Heart right ventricle (tissue), 16 donors: ENCODE measurements at regions of chr6 and their contacts with region 1.

Region 1: DNA sequence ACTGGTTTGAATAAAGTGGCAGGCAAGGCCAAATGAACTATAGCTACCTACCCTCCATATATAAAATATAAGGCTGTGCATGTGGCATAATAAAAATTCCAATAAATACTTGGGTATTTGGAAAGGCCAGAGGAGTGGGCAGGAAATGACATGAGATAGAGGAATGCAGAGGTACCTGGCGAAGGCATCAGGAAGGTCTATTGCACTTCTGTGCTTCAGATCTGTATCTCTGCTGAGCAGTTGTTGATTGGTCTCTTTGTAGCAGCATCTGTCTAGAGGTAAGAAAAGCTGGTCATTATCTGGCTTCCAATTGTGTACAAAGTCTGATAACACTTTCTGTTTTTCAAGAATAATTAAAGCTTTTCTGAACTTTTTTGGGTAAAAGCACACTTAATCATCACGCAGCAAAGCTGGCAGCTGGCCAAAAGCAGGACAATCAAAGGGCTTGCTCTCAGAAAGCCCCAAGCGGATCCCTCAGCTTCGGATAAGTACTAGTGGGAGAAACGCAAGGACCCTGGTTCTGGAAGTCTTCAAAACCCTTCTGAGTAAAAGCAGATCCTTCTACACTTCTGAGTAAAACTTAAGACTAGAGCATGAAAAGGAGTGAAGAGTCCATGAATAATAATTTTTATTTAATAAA is 120.1 kb upstream of the TCF21 start:
- DNase-seq: peak; percentile 14 to 25
- ATAC-seq: no peak
- H3K4me3 ChIP-seq: no peak overlapping the region
- H3K27ac ChIP-seq: peak overlapping the region in 1 of 10 donors; percentile 9
- H3K4me1 ChIP-seq: peaks cover 0 to 17% (median 0%) of the 10 kb centered on the region in 9 donors
- H3K27me3 ChIP-seq: peaks cover 0 to 4% (median 0%) of the 10 kb centered on the region in 7 donors
- CTCF ChIP-seq: no peak

Region 2: GRCh38 chr6:133730881-133731280 is 37.9 kb before region 1 on chr6:
- intact Hi-C with region 1: no loop called
- DNase-seq: no peak
- ATAC-seq: no peak
- H3K4me3 ChIP-seq: no peak overlapping the region
- H3K27ac ChIP-seq: peak overlapping the region in 1 of 10 donors; percentile 35
- H3K4me1 ChIP-seq: no peaks in the 10 kb centered on the region
- H3K27me3 ChIP-seq: no peaks in the 10 kb centered on the region
- CTCF ChIP-seq: no peak

Region 3: DNA sequence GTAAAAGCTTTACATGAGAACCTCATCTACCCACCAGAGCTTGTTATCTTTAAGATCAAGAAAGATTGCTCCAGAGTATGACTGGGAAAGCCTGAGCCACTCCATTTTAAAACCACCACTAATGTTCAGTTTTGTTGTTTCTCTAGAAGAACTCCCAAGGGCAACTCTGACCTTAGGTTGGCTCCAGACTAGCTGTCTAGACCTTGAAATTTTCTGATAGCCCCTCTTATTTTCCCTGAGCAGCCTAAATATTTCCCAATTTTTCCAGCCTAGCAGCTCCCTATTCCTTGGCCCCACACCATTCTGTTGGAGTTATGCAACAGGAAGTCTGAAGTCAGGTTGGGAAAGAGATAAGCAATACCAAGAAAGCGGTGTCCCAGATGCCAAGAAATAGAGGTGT is 35.5 kb after region 1 on chr6:
- intact Hi-C with region 1: no loop called
- DNase-seq: peak in 1 of 2 donors; percentile 12
- ATAC-seq: peak; percentile 53 to 87 (median 70)
- H3K4me3 ChIP-seq: no peak overlapping the region
- H3K27ac ChIP-seq: peak overlapping the region in 1 of 10 donors; percentile 24
- H3K4me1 ChIP-seq: peaks cover 0 to 5% (median 0%) of the 10 kb centered on the region in 9 donors
- H3K27me3 ChIP-seq: no peaks in the 10 kb centered on the region
- CTCF ChIP-seq: no peak

Region 4: DNA sequence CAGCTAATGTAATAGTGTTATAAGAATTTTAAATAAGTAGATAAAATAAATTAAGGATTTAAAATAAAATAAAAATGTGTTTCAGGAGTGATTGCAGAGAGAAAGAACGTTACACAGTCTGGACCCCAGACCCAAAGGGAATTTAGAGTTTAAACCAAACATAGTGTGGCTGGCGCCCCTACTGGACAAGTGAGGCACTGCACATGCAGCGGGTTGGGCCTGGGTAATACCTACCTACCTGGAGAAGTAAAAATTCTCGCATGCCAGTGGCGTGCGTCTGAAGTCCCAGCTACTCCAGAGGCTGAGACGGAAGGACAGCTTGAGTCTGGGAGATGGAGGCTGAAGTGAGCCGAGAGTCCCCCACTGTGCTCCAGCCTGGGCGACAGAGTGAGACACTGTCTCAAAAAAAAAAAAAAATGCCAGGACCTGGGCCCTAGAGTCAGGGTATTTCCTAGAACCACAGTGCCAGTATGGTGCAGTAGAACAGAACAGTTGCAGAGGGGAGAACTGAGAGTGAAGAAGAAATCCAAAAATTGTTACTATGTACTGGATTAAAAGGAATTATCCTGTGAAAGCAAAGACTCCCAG is 48.8 kb after region 1 on chr6:
- intact Hi-C with region 1: loop called in 1 of 10 experiments (anchors 10 kb)
- DNase-seq: no peak
- ATAC-seq: no peak
- H3K4me3 ChIP-seq: no peak overlapping the region
- H3K27ac ChIP-seq: peak overlapping the region in 1 of 10 donors; percentile 18
- H3K4me1 ChIP-seq: peaks cover 0 to 5% (median 0%) of the 10 kb centered on the region in 9 donors
- H3K27me3 ChIP-seq: no peaks in the 10 kb centered on the region
- CTCF ChIP-seq: peak; percentile 11 to 62 (median 38)

Region 5: GRCh38 chr6:133877116-133877515 is 108.3 kb after region 1 on chr6:
- intact Hi-C with region 1: no loop called
- DNase-seq: no peak
- ATAC-seq: peak in 1 of 8 donors; percentile 25
- H3K4me3 ChIP-seq: peak overlapping the region in 7 of 10 donors; percentile 3 to 36 (median 25)
- H3K27ac ChIP-seq: no peak overlapping the region
- H3K4me1 ChIP-seq: no peaks in the 10 kb centered on the region
- H3K27me3 ChIP-seq: peaks cover 0 to 39% (median 8%) of the 10 kb centered on the region in 7 donors
- CTCF ChIP-seq: no peak

Region 6: GRCh38 chr6:133891149-133891926 is 122.6 kb after region 1 on chr6:
- intact Hi-C with region 1: loop called in 3 of 10 experiments (anchors 5 to 10 kb)
- DNase-seq: peak; percentile 26 to 40
- ATAC-seq: peak in 3 of 8 donors; percentile 6 to 16 (median 15)
- H3K4me3 ChIP-seq: peak overlapping the region; percentile 47 to 66 (median 56)
- H3K27ac ChIP-seq: peak overlapping the region; percentile 53 to 89 (median 85)
- H3K4me1 ChIP-seq: peaks cover 0 to 66% (median 38%) of the 10 kb centered on the region in 9 donors
- H3K27me3 ChIP-seq: peaks cover 0 to 99% (median 89%) of the 10 kb centered on the region in 7 donors
- CTCF ChIP-seq: no peak

Region 7: GRCh38 chr6:133916650-133917151 is 147.9 kb after region 1 on chr6:
- intact Hi-C with region 1: no loop called
- DNase-seq: peak; percentile 87
- ATAC-seq: peak; percentile 55 to 91 (median 85)
- H3K4me3 ChIP-seq: no peak overlapping the region
- H3K27ac ChIP-seq: no peak overlapping the region
- H3K4me1 ChIP-seq: peaks cover 0 to 11% (median 0%) of the 10 kb centered on the region in 9 donors
- H3K27me3 ChIP-seq: peaks cover 0 to 12% (median 0%) of the 10 kb centered on the region in 7 donors
- CTCF ChIP-seq: peak; percentile 56 to 94 (median 88)